ENCODE measurements at regions of chr11 and their contacts with region 1.

Region 1: GRCh38 chr11:72091005-72091691 is 10.5 kb downstream of the LRRC51 start:
- DNase-seq: peak; percentile 78 to 80
- ATAC-seq: peak; percentile 89
- H3K4me3 ChIP-seq: no peak overlapping the region
- H3K27ac ChIP-seq: no peak overlapping the region
- H3K4me1 ChIP-seq: no peaks in the 10 kb centered on the region
- H3K27me3 ChIP-seq: no peaks in the 10 kb centered on the region

Region 2: GRCh38 chr11:71977743-71978418 is 113.3 kb before region 1 on chr11:
- intact Hi-C with region 1: loop called in 1 of 2 experiments (anchors 2 kb)
- DNase-seq: peak in 1 of 2 donors; percentile 60
- ATAC-seq: peak; percentile 77
- H3K4me3 ChIP-seq: no peak overlapping the region
- H3K27ac ChIP-seq: no peak overlapping the region
- H3K4me1 ChIP-seq: no peaks in the 10 kb centered on the region
- H3K27me3 ChIP-seq: no peaks in the 10 kb centered on the region

Region 3: GRCh38 chr11:72030472-72031045 is 60.6 kb before region 1 on chr11:
- intact Hi-C with region 1: loop called (anchors 1 kb)
- DNase-seq: no peak
- ATAC-seq: no peak
- H3K4me3 ChIP-seq: no peak overlapping the region
- H3K27ac ChIP-seq: no peak overlapping the region
- H3K4me1 ChIP-seq: no peaks in the 10 kb centered on the region
- H3K27me3 ChIP-seq: no peaks in the 10 kb centered on the region

Region 4: DNA sequence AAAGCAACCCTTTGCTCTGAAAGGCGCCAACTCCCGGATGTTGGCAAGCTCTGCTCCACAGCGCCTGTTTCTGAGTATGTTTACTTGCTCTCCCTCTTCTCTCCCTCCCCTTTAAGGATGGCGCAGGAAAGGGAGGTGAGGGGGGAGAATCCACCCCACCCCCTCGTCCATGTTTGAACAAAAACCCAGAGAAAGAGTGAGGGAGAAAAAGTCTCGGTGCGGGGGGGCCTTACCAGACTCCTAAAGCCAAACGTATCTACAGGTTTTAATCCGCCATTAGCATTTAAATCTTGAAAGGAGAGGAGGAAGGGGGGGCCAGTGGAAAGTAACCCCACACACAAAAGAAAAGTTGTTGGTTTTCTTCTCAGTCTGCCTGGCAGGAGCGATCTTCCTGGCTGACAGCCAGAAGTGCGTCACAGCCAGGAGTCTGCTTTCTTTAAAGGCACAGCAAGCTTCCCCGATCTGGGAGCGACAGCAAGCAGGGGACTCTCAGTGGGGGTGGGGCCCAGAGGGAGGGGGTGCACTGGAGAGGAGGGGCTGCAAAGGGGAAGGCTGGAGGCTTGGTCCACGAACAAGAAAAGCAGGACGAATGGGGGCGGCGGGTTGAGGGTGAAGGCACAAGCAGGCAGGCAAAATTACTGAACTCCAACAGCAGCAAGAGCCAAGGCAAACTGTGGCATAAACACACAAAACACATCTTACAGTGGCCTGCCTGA is 50.3 kb before region 1 on chr11:
- intact Hi-C with region 1: no loop called
- DNase-seq: peak; percentile 98
- ATAC-seq: peak; percentile 92
- H3K4me3 ChIP-seq: peak overlapping the region; percentile 30 to 82
- H3K27ac ChIP-seq: peak overlapping the region; percentile 46 to 91
- H3K4me1 ChIP-seq: peaks cover 12 to 13% of the 10 kb centered on the region in 2 donors
- H3K27me3 ChIP-seq: no peaks in the 10 kb centered on the region

Measured in aorta (tissue), 5 donors.